Ovary (tissue), 10 donors: ENCODE measurements at regions of chr13 and their contacts with region 1.

Region 1: DNA sequence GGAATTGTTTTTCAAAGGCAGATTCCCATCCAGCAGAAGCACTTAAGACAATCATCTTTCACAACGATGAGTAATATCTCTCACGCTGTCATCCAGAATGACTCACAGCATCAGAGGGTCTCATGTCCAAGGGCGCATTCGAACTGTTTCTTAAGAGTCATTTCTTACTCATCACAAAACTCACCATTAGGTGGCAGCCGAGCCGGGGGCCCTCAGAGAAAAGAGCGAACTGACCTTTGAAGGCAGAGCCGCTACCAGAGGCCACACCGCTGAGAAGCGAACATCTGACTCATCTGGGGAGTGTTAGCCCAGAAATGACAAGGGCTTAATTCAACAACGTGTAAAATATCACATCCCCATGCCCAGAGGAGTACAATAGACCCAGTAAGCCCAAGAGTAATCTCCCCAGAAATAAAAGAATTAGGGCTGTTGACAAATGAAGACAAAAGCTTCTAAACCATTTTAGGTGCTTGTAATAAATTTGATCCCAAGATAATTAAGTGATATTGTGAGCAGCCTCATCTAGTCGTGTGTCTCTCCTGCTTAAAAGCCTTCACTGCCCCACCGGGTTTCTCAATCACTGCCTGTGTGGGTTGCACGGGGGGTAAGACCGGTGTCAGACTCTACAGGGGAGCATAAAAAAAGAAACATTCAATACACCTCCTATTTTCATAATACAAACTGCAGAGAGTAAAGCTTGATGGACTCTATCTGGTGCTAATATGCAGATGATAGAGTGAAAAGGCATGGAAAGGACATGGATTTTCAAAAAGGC is 96.2 kb downstream of the CYSLTR2 start:
- DNase-seq: peak; percentile 76 to 89 (median 79)
- H3K4me3 ChIP-seq: no peak overlapping the region
- H3K27ac ChIP-seq: peak overlapping the region in 1 of 2 donors; percentile 83
- H3K4me1 ChIP-seq: peaks cover 9% of the 10 kb centered on the region
- H3K27me3 ChIP-seq: no peaks in the 10 kb centered on the region
- CTCF ChIP-seq: peak in 2 of 3 donors; percentile 39 to 64
- EP300 ChIP-seq: no peak
- POLR2A ChIP-seq: no peak

Region 2: GRCh38 chr13:48615049-48615448 is 134.8 kb before region 1 on chr13:
- intact Hi-C with region 1: loop called in 1 of 4 experiments (anchors 10 kb)
- DNase-seq: no peak
- H3K4me3 ChIP-seq: no peak overlapping the region
- H3K27ac ChIP-seq: no peak overlapping the region
- H3K4me1 ChIP-seq: no peaks in the 10 kb centered on the region
- H3K27me3 ChIP-seq: no peaks in the 10 kb centered on the region
- CTCF ChIP-seq: no peak
- EP300 ChIP-seq: no peak
- POLR2A ChIP-seq: no peak